ENCODE measurements at regions of chr14 and their contacts with region 1.

Region 1: GRCh38 chr14:21383848-21384493 is at the start of gene SUPT16H:
- DNase-seq: peak; percentile 99
- H3K4me3 ChIP-seq: peak within 1 kb of the TSS; percentile 75
- H3K27ac ChIP-seq: peak within 1 kb of the TSS; percentile 96
- H3K4me1 ChIP-seq: peaks cover 22% of the 10 kb centered on the region
- H3K27me3 ChIP-seq: no peaks in the 10 kb centered on the region
- CTCF ChIP-seq: no peak
- total RNA-seq, gene SUPT16H: 193 and 196 TPM in 2 replicates

Region 2: DNA sequence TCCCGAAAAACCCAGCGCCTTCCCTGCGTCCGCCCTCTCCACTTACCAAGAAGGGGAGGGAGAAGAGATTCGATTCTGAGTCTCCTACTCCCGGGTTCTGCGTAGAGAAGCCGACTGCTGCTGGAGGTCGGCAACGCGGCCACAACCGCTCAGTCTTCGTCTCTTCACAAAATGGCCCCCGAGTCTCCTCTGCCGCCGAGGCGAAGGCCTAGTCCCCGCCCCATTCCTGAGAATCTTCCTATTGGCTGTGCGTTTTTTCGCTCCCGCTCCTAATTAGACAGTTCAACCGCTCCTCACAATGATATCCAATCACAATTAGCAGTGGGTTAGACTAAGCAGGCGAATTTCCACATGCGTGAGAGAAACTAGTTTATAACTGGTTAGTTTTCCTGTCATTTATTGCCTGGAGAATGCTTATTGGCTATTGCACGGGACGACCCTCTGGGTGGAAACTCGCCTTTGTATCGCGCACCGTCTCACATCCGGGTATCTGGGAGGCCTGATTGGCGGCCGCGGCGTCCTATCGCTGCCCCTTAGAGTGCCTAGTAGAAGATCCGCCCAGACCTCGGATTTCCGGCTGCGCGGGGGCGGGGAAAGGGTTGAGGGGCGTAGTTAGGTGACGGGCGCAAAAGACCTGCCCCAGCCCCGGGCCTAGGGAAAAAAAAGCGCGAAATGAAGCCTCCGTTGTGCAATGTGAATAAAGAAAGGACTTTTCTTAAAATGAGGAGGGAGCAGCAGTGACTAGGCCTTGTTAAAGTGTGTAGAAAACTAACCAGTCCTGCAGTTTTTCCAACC is 114.5 kb before region 1 on chr14 and contains the start of gene HNRNPC:
- CTCF ChIA-PET with region 1: no interaction called
- POLR2A ChIA-PET with region 1: no interaction called
- intact Hi-C with region 1: loop called (anchors 5 kb)
- DNase-seq: peak; percentile 100
- H3K4me3 ChIP-seq: peak within 1 kb of the TSS; percentile 68
- H3K27ac ChIP-seq: peak within 1 kb of the TSS; percentile 91
- H3K4me1 ChIP-seq: peaks cover 24% of the 10 kb centered on the region
- H3K27me3 ChIP-seq: no peaks in the 10 kb centered on the region
- CTCF ChIP-seq: no peak
- total RNA-seq, gene HNRNPC: 934 and 949 TPM in 2 replicates

Region 3: DNA sequence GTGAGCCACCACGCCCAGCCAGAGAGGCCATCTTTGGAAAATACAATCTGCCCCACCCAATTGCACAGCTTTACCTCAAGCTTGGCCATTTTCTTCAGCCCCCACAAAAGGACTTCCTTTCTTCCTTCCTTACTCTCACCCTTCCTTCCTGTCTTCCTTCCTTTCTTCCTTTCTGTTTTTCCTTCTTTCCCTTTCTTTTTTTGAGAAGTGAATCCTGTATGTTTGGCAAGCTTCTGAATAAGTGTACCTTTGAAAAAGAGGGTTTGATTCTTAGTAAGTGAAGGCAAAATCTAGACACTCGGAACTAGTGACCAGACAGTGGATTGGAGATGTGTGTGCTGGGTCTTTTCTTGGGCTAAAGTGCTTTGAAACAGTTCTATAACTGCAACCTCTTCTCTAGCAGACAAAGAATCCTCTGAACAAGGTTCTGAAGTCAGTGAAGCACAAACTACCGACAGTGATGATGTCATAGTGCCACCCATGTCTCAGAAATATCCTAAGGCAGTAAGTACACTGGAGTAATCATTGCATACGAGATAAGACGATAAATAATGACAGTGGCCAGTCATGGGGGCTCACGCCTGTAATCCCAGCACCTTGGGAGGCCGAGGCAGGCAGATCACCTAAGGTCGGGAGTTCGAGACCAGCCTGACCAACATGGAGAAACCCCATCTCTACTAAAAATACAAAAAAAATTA is 49.6 kb before region 1 on chr14:
- CTCF ChIA-PET with region 1: no interaction called
- POLR2A ChIA-PET with region 1: interaction called, 18 read pairs
- intact Hi-C with region 1: no loop called
- DNase-seq: no peak
- H3K4me3 ChIP-seq: no peak overlapping the region
- H3K27ac ChIP-seq: no peak overlapping the region
- H3K4me1 ChIP-seq: no peaks in the 10 kb centered on the region
- H3K27me3 ChIP-seq: no peaks in the 10 kb centered on the region
- CTCF ChIP-seq: no peak

Region 4: DNA sequence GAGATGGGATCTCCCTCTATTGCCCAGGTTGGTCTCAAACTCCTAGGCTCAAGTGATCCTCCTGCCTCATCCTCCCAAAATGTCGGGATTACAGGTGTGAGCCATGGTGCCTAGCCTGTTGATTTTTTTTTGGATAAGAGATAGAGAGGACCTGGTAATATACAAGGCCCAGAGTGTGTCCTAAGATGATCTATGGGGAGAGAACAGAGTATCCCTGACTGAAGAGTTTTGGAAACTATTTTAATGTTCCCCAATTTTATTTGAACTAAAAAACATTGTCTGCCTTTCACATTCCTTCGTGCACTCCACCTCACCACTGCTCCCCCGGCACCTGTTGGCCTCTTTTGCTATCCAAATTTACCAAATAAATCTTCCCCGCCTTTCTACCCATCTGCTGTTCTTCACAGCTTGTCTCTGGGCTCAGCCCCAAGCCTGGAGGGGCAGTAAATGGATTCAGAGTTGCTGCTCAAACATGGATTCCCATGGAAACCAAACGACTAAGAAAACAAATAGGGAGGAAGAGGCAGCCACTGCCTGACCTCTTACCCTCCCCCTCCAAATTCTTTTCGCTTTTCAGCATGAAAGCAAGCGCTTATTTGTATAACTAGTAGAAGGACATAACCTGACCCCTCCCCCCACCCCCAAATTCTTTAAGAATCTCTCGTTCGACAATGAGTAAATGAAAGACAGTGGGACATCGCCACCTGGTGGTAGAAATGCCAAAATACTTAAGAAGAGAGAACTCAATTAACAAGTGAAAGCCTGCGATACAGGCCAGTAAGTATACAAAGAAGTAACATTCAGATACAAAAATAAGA is 173.3 kb after region 1 on chr14:
- CTCF ChIA-PET with region 1: no interaction called
- POLR2A ChIA-PET with region 1: no interaction called
- intact Hi-C with region 1: loop called (anchors 5 kb)
- DNase-seq: peak; percentile 94
- H3K4me3 ChIP-seq: peak overlapping the region; percentile 39
- H3K27ac ChIP-seq: peak overlapping the region; percentile 17
- H3K4me1 ChIP-seq: peaks cover 6% of the 10 kb centered on the region
- H3K27me3 ChIP-seq: no peaks in the 10 kb centered on the region
- CTCF ChIP-seq: peak; percentile 79

Region 5: DNA sequence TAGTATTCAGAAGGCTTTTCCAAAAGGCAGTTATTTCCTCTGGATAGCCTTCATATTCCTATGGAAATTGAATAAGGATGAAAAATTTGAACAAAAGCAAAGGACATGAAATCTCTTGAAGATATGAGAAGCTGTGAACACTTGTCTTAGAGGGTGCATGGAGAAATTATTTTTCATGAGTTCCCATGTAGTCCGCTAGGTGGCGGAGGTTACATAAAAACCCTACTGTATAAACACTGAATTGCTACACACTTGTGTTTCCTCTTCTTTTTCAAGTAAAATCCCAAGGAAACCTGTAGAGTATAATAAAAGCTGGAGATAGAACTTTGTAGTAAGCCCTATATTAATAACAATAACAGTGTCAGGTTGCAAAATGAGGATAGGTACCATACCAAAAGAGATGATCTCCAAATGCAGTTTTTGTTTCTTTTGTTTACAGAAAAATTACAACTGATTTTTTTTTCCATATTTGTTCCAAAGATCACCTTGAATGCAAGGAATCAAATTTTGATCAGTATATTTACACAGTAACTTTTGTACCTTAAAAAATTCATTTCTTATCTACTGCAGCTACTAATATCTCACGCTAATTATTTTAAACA is 327.5 kb after region 1 on chr14:
- CTCF ChIA-PET with region 1: no interaction called
- POLR2A ChIA-PET with region 1: no interaction called
- intact Hi-C with region 1: no loop called
- DNase-seq: peak; percentile 79
- H3K4me3 ChIP-seq: no peak overlapping the region
- H3K27ac ChIP-seq: peak overlapping the region; percentile 49
- H3K4me1 ChIP-seq: peaks cover 14% of the 10 kb centered on the region
- H3K27me3 ChIP-seq: no peaks in the 10 kb centered on the region
- CTCF ChIP-seq: peak; percentile 84